ENCODE measurements at regions of chrX and their contacts with region 1.

Region 1: GRCh38 chrX:38260231-38260630 is 39.6 kb upstream of the SRPX start:
- DNase-seq: peak; percentile 39
- CTCF ChIP-seq: peak; percentile 38

Region 2: GRCh38 chrX:38126179-38126578 is 134.1 kb before region 1 on chrX:
- CTCF ChIA-PET with region 1: no interaction called
- POLR2A ChIA-PET with region 1: no interaction called
- DNase-seq: no peak
- CTCF ChIP-seq: no peak

Region 3: GRCh38 chrX:38271154-38271716 is 11.0 kb after region 1 on chrX:
- CTCF ChIA-PET with region 1: interaction called, 11 read pairs
- POLR2A ChIA-PET with region 1: interaction called, 3 read pairs
- DNase-seq: peak; percentile 15
- CTCF ChIP-seq: no peak

Measured in GM10248 (cell line).